OCI-LY7 (cell line): ENCODE measurements at regions of chr3 and their contacts with region 1.

Region 1: GRCh38 chr3:76969996-76970615 is 69.8 kb upstream of the ROBO2 start:
- DNase-seq: no peak
- H3K4me3 ChIP-seq: no peak overlapping the region
- H3K27ac ChIP-seq: no peak overlapping the region
- H3K4me1 ChIP-seq: no peaks in the 10 kb centered on the region
- CTCF ChIP-seq: no peak

Region 2: DNA sequence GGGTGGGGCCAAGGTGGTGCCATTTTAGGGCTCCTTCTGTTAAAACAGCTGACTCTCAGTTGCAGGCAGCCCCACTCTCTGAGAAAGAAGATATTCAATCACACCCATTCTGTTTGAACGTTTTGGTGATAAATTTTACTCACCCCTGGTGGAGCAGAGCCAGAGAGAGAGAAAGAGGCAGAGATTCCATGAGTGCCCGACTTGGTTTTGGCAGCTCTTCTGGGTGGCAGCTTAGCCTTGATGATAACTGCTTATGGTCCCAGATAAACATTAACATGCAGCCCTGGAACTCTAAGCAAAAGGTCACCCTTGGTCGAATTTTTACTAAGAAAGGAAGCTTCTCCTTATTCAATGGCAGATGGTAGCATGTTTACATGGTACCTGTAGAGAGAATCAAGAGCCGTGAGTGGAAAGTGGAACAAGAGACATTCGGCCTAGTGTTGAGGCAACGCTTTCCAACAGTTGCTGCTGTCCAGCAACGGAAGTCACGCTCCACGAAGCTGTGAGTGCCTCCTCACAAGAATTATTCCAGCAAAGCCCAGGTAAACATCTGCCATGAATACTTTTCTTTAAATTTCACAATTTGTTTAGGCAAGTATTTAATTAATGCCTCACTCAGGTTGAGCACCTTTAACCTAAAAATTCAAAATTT is 460.8 kb before region 1 on chr3:
- CTCF ChIA-PET with region 1: no interaction called
- POLR2A ChIA-PET with region 1: no interaction called
- intact Hi-C with region 1: no loop called
- DNase-seq: no peak
- H3K4me3 ChIP-seq: no peak overlapping the region
- H3K27ac ChIP-seq: no peak overlapping the region
- H3K4me1 ChIP-seq: no peaks in the 10 kb centered on the region
- CTCF ChIP-seq: no peak

Region 3: DNA sequence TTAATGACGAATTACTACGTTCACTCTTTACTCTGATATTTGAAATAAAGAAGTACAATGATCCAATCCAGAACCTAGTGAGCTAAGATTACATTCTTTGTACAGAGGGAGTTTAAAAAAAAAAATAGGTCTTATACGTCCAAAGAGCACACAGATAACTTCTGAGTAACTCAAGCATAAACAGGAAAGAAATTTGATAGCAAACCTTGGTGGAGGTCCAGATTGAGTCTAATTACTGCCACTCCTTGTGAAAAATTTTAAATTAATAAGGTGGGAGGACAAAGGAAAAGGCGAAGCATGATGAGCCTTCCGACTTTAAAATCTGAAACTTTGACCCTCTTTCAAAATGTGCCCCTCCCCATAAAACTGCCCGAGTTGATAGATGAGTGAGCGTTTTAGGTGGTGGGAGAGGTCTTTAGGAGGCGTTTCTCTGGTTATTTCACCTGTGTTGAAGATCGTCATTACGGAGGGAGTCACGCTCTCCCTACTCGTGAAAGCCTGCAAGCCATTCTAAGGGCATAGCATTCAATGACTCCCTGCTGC is 57.2 kb before region 1 on chr3:
- CTCF ChIA-PET with region 1: no interaction called
- POLR2A ChIA-PET with region 1: no interaction called
- intact Hi-C with region 1: loop called (anchors 10 kb)
- DNase-seq: no peak
- H3K4me3 ChIP-seq: no peak overlapping the region
- H3K27ac ChIP-seq: no peak overlapping the region
- H3K4me1 ChIP-seq: no peaks in the 10 kb centered on the region
- CTCF ChIP-seq: no peak